ENCODE measurements at regions of chr4 and their contacts with region 1.

Region 1: DNA sequence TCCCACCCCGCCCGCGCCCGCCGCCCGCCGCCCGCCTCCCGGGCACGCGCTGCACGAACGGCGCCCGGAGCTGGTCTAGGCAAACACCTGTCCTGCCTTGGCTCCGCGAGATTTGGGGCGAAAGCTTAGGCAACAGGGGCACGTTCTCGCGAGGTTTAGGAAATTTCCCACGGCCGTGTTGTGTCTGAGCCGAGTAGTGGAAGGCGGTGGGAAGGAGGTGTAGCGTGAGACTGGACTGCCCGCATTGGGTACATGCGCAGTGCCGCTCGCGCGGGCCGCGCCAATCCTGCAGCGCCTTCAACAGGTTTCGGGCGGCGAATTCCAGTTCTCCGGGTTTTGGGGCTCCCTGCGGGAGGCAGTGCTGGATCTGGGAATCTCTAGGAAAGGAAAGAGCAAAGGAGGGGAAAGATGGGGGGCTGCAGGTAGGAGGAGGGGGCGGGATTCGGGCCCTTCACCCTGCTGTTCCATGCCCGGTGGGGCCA is 1.3 kb upstream of the RBPJ start:
- DNase-seq: peak; percentile 99
- H3K4me3 ChIP-seq: peak overlapping the region; percentile 96
- H3K27ac ChIP-seq: peak overlapping the region; percentile 82
- H3K4me1 ChIP-seq: peaks cover 15% of the 10 kb centered on the region
- CTCF ChIP-seq: 0 out of 2 replicates have a peak, but pooled peaks have one; percentile 28

Region 2: DNA sequence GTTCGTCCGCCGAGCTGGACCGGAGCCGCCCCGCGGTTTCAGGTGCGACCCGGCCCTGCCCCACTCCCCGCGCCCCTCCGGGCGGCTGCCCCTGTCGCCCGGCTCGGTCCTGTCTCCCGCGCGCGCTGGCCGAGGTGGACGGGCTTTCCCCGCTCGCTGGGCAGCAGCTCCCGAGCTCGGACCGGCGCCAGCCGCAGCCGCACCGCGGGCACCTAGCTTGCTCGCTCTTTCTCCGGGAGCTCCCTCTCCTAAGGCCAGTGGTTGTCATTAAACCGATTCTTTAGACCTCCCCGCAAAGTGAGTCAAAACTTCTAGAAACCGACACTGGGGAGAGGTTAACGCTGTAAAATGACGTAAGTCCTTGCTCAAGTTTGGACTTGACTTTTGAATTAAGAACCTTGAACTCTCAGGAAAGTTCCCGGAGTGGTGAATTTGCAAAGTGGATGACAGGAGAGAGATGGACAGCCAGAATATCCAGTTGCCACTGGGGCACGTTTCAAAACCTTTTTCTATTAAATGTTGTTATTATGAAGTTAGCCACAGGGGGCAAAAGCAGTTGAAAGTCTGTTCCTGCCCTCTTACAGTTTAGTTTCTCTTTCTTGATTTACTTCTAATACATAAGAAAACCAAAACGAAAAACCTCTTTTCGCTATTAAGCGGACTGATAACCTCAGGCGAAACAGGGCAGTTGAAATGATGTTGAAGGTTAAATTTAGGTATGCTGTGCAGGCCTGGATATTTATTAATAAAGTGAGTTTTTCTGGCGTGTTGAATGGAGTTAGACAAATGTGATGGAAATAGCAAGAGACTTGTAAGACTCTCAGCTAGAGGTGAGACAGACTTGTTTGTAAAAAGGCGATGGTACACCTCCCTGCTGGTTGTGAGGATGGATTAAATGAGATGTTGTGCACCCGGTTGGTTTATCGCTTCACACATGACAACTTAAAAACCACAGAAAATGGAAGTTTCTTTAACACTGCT is 1084.8 kb before region 1 on chr4:
- CTCF ChIA-PET with region 1: no interaction called
- POLR2A ChIA-PET with region 1: no interaction called
- intact Hi-C with region 1: loop called (anchors 10 kb)
- DNase-seq: peak; percentile 85
- H3K4me3 ChIP-seq: peak overlapping the region; percentile 96
- H3K27ac ChIP-seq: peak overlapping the region; percentile 88
- H3K4me1 ChIP-seq: peaks cover 43% of the 10 kb centered on the region
- CTCF ChIP-seq: peak; percentile 79

Region 3: GRCh38 chr4:25842229-25842845 is 477.2 kb before region 1 on chr4:
- CTCF ChIA-PET with region 1: no interaction called
- POLR2A ChIA-PET with region 1: interaction called, 3 read pairs
- intact Hi-C with region 1: loop called (anchors 5 kb)
- DNase-seq: peak; percentile 72
- H3K4me3 ChIP-seq: no peak overlapping the region
- H3K27ac ChIP-seq: peak overlapping the region; percentile 9
- H3K4me1 ChIP-seq: peaks cover 44% of the 10 kb centered on the region
- CTCF ChIP-seq: peak; percentile 86

Region 4: GRCh38 chr4:25862411-25863346 is 456.8 kb before region 1 on chr4 and contains the start of gene SEL1L3:
- CTCF ChIA-PET with region 1: no interaction called
- POLR2A ChIA-PET with region 1: no interaction called
- intact Hi-C with region 1: loop called (anchors 5 kb)
- DNase-seq: peak; percentile 67
- H3K4me3 ChIP-seq: peak within 1 kb of the TSS; percentile 75
- H3K27ac ChIP-seq: peak within 1 kb of the TSS; percentile 99
- H3K4me1 ChIP-seq: peaks cover 69% of the 10 kb centered on the region
- CTCF ChIP-seq: no peak
- total RNA-seq, gene SEL1L3: 173 and 180 TPM in 2 replicates

Region 5: GRCh38 chr4:25913851-25914669 is 405.4 kb before region 1 on chr4 and contains the start of gene SMIM20:
- CTCF ChIA-PET with region 1: no interaction called
- POLR2A ChIA-PET with region 1: no interaction called
- intact Hi-C with region 1: loop called (anchors 5 kb)
- DNase-seq: peak; percentile 93
- H3K4me3 ChIP-seq: peak within 1 kb of the TSS; percentile 74
- H3K27ac ChIP-seq: peak within 1 kb of the TSS; percentile 78
- H3K4me1 ChIP-seq: peaks cover 26% of the 10 kb centered on the region
- CTCF ChIP-seq: no peak
- total RNA-seq, gene SMIM20: 33.4 and 44.0 TPM in 2 replicates

Region 6: DNA sequence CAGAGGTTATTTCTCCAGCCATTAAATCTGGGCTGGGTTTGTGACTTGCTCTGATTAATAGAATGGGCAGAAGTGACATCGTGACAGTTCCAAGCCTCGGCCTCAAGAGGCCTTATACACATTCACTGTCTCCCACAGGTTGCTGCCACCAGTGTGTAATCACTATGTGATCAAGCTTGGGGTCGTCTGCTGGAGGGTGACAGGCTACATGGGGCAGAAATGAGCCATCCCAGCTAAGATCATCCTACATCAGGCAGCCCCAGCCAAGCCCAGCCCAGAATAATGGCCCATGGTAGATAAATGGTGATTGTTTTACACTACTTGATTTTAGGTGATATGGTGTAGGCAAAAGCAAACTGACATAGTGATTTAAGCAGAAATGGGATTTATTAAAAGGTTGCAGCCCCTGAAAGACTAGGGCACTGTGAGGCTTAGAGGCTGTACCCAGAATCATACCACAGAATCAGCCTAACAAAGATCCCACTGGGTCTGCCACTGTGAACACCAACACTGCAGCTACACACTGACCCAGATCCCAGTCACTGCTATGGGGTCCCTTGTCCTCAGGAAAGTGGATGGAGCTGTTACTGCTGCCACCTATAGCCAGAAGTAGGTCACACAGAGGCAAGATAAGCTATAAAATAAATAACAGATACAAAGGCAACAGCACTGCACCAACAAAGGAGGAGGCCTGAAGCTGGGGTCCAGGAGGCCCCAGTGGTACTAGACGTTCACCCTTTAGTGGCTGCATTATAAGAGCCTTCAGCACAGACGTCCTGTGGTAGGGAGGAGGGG is 158.3 kb before region 1 on chr4:
- CTCF ChIA-PET with region 1: no interaction called
- POLR2A ChIA-PET with region 1: no interaction called
- intact Hi-C with region 1: no loop called
- DNase-seq: peak; percentile 19
- H3K4me3 ChIP-seq: no peak overlapping the region
- H3K27ac ChIP-seq: no peak overlapping the region
- H3K4me1 ChIP-seq: no peaks in the 10 kb centered on the region
- CTCF ChIP-seq: peak; percentile 58; the same call in 1 of the 2 replicates

Region 7: GRCh38 chr4:26192899-26193778 is 126.4 kb before region 1 on chr4:
- CTCF ChIA-PET with region 1: no interaction called
- POLR2A ChIA-PET with region 1: no interaction called
- intact Hi-C with region 1: no loop called
- DNase-seq: no peak
- H3K4me3 ChIP-seq: no peak overlapping the region
- H3K27ac ChIP-seq: no peak overlapping the region
- H3K4me1 ChIP-seq: peaks cover 8% of the 10 kb centered on the region
- CTCF ChIP-seq: no peak

Region 8: GRCh38 chr4:26346203-26346620 is 26.7 kb after region 1 on chr4:
- CTCF ChIA-PET with region 1: no interaction called
- POLR2A ChIA-PET with region 1: no interaction called
- intact Hi-C with region 1: no loop called
- DNase-seq: no peak
- H3K4me3 ChIP-seq: no peak overlapping the region
- H3K27ac ChIP-seq: no peak overlapping the region
- H3K4me1 ChIP-seq: peaks cover 12% of the 10 kb centered on the region
- CTCF ChIP-seq: no peak

Region 9: DNA sequence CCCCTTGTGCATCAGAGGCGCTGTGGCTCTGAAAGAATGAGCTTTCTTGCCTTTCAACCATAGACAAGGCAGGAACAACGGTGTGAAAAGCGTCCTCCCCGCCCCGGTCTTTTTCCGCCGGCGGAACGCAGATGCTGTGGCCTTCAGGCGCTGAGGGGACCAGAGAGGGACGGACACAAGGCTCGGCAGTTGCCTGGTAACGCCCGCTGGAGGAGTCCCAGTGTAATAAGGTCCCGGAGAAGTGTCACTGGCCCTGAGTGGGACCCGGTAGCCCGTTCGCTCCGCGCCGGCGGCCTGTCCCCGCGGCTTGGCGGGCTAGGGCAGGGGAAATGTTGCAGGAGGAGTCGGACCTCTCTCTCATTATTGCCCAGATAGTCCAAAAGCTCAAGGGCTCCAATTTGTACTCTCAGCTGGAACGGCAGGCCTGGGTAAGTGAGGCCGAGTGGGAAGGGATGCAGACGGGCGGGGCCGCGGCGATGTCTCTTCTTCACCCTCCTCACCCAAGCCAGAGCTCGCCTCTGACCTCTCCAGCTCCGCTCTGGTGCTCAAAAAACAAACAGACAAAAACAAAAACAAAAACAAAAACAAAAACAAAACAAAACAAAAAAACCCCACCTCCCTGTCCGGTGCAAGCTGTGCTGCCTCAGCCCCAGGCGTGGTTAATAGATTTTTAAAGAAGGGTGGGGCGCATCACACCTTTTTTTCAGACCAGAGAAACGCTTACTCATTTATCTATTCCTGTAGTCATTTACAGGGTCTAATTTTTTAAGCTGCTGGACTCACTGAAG is 264.6 kb after region 1 on chr4 and contains the start of gene TBC1D19:
- CTCF ChIA-PET with region 1: no interaction called
- POLR2A ChIA-PET with region 1: no interaction called
- intact Hi-C with region 1: loop called (anchors 5 kb)
- DNase-seq: peak; percentile 93
- H3K4me3 ChIP-seq: peak within 1 kb of the TSS; percentile 86
- H3K27ac ChIP-seq: peak within 1 kb of the TSS; percentile 48
- H3K4me1 ChIP-seq: peaks cover 25% of the 10 kb centered on the region
- CTCF ChIP-seq: no peak; the same call in 1 of the 2 replicates
- total RNA-seq, gene TBC1D19: 9.8 and 11.0 TPM in 2 replicates

Region 10: GRCh38 chr4:26719954-26720552 is 400.5 kb after region 1 on chr4:
- CTCF ChIA-PET with region 1: no interaction called
- POLR2A ChIA-PET with region 1: no interaction called
- intact Hi-C with region 1: loop called (anchors 10 kb)
- DNase-seq: peak; percentile 49
- H3K4me3 ChIP-seq: no peak overlapping the region
- H3K27ac ChIP-seq: no peak overlapping the region
- H3K4me1 ChIP-seq: peaks cover 36% of the 10 kb centered on the region
- CTCF ChIP-seq: peak; percentile 97